Left ventricle myocardium superior (tissue), 1 donor: ENCODE measurements at regions of chr5 and their contacts with region 1.

Region 1: GRCh38 chr5:35707659-35708058 is 90.0 kb downstream of the SPEF2 start:
- DNase-seq: no peak
- ATAC-seq: no peak

Region 2: GRCh38 chr5:35159370-35159742 is 548.3 kb before region 1 on chr5:
- intact Hi-C with region 1: no loop called
- DNase-seq: no peak
- ATAC-seq: peak; percentile 83

Region 3: GRCh38 chr5:35674049-35674448 is 33.6 kb before region 1 on chr5:
- intact Hi-C with region 1: loop called (anchors 2 kb)
- DNase-seq: no peak
- ATAC-seq: no peak